Naive thymus-derived CD4-positive, alpha-beta T cell (primary cell): ENCODE measurements at regions of chr6 and their contacts with region 1.

Region 1: GRCh38 chr6:11232193-11232769 is at the start of gene NEDD9:
- DNase-seq: peak; percentile 76 to 97 (median 90)
- ATAC-seq: peak; percentile 97
- H3K4me3 ChIP-seq: peak within 1 kb of the TSS; percentile 69
- H3K4me3 Mint-ChIP-seq: peak within 1 kb of the TSS; percentile 86 to 98 (median 94)
- H3K27ac ChIP-seq: peak within 1 kb of the TSS; percentile 76
- H3K27ac Mint-ChIP-seq: peak within 1 kb of the TSS; percentile 88 to 99 (median 98)
- H3K4me1 ChIP-seq: peaks cover 19 to 26% of the 10 kb centered on the region in 2 donors
- H3K4me1 Mint-ChIP-seq: peaks cover 32 to 78% (median 46%) of the 10 kb centered on the region in 7 donors
- H3K27me3 ChIP-seq: no peaks in the 10 kb centered on the region
- H3K27me3 Mint-ChIP-seq: no peaks in the 10 kb centered on the region
- total RNA-seq, gene NEDD9: 29.4 to 62.9 (median 40.2) TPM

Region 2: DNA sequence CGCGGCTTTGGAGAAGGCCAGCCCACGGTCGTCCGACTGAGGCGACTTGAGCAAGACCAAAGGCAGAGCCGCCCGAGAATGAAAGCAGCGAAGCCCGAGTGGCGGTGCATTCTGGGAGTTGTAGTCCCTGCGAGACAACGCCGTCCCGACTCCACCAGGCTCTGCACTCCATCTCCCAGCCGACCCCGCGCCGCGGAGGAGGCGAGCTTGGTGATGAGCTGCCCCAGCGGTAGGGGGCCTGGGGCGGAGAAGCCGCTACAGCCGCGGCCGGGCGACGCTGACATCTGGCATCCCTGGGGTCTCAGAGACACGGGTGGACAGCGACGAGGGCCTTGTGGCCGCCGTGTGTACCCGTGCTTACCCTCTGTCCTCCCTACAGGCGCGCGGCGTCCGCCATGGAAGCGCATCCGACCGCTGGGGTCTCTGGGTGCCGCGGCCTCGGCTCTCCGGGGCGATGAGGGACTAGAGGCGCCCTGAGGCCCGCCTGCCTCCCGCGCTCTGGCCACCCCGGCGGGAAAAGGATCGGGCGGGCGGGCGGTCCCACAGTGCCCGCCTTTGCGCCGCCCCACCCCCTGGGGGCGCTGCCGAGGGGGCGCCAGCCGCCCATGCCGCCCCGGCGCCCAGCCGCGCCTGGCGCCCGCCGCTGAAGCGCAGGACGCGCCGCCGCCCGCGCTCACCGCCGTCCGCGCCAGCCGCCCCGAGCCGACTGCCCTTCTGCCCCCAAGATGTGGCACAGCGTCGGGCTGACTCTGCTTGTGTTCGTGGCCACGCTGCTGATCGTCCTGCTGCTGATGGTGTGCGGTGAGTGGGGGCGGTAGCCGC is 138.5 kb before region 1 on chr6 and contains the start of gene SMIM13:
- CTCF ChIA-PET with region 1: no interaction called
- POLR2A ChIA-PET with region 1: no interaction called
- intact Hi-C with region 1: loop called (anchors 1 kb)
- DNase-seq: peak; percentile 85 to 94 (median 93)
- ATAC-seq: peak; percentile 96
- H3K4me3 ChIP-seq: peak within 1 kb of the TSS; percentile 97
- H3K4me3 Mint-ChIP-seq: peak within 1 kb of the TSS; percentile 83 to 98 (median 97)
- H3K27ac ChIP-seq: peak within 1 kb of the TSS; percentile 88
- H3K27ac Mint-ChIP-seq: peak within 1 kb of the TSS; percentile 89 to 98 (median 97)
- H3K4me1 ChIP-seq: peaks cover 11 to 14% of the 10 kb centered on the region in 2 donors
- H3K4me1 Mint-ChIP-seq: peaks cover 21 to 43% (median 27%) of the 10 kb centered on the region in 7 donors
- H3K27me3 ChIP-seq: no peaks in the 10 kb centered on the region
- H3K27me3 Mint-ChIP-seq: no peaks in the 10 kb centered on the region
- total RNA-seq, gene SMIM13: 4.0 to 9.9 (median 4.4) TPM

Region 3: GRCh38 chr6:11209906-11210305 is 22.4 kb before region 1 on chr6:
- CTCF ChIA-PET with region 1: no interaction called
- POLR2A ChIA-PET with region 1: no interaction called
- intact Hi-C with region 1: loop called in 1 of 2 experiments (anchors 2 kb)
- DNase-seq: no peak
- ATAC-seq: no peak
- H3K4me3 ChIP-seq: no peak overlapping the region
- H3K4me3 Mint-ChIP-seq: no peak overlapping the region
- H3K27ac ChIP-seq: no peak overlapping the region
- H3K27ac Mint-ChIP-seq: peak overlapping the region in 1 of 9 donors; percentile 64
- H3K4me1 ChIP-seq: peaks cover 0 to 17% of the 10 kb centered on the region in 2 donors
- H3K4me1 Mint-ChIP-seq: peaks cover 12 to 68% (median 29%) of the 10 kb centered on the region in 7 donors
- H3K27me3 ChIP-seq: no peaks in the 10 kb centered on the region
- H3K27me3 Mint-ChIP-seq: no peaks in the 10 kb centered on the region

Region 4: GRCh38 chr6:11317885-11318771 is 85.8 kb after region 1 on chr6:
- CTCF ChIA-PET with region 1: no interaction called
- POLR2A ChIA-PET with region 1: no interaction called
- intact Hi-C with region 1: loop called in 1 of 2 experiments (anchors 1 kb)
- DNase-seq: peak in 6 of 9 donors; percentile 2 to 53 (median 14)
- ATAC-seq: peak; percentile 90
- H3K4me3 ChIP-seq: no peak overlapping the region
- H3K4me3 Mint-ChIP-seq: peak overlapping the region in 1 of 10 donors; percentile 8
- H3K27ac ChIP-seq: no peak overlapping the region
- H3K27ac Mint-ChIP-seq: peak overlapping the region in 6 of 9 donors; percentile 8 to 62 (median 31)
- H3K4me1 ChIP-seq: peaks cover 0 to 10% of the 10 kb centered on the region in 2 donors
- H3K4me1 Mint-ChIP-seq: peaks cover 13 to 51% (median 30%) of the 10 kb centered on the region in 7 donors
- H3K27me3 ChIP-seq: no peaks in the 10 kb centered on the region
- H3K27me3 Mint-ChIP-seq: no peaks in the 10 kb centered on the region

Region 5: GRCh38 chr6:11414176-11414963 is 182.1 kb after region 1 on chr6:
- CTCF ChIA-PET with region 1: no interaction called
- POLR2A ChIA-PET with region 1: no interaction called
- intact Hi-C with region 1: loop called in 1 of 2 experiments (anchors 2 kb)
- DNase-seq: peak in 6 of 9 donors; percentile 11 to 30 (median 18)
- ATAC-seq: peak; percentile 77
- H3K4me3 ChIP-seq: no peak overlapping the region
- H3K4me3 Mint-ChIP-seq: no peak overlapping the region
- H3K27ac ChIP-seq: no peak overlapping the region
- H3K27ac Mint-ChIP-seq: peak overlapping the region in 1 of 9 donors; percentile 10
- H3K4me1 ChIP-seq: peaks cover 0 to 4% of the 10 kb centered on the region in 2 donors
- H3K4me1 Mint-ChIP-seq: peaks cover 6 to 45% (median 10%) of the 10 kb centered on the region in 7 donors
- H3K27me3 ChIP-seq: no peaks in the 10 kb centered on the region
- H3K27me3 Mint-ChIP-seq: no peaks in the 10 kb centered on the region

Region 6: DNA sequence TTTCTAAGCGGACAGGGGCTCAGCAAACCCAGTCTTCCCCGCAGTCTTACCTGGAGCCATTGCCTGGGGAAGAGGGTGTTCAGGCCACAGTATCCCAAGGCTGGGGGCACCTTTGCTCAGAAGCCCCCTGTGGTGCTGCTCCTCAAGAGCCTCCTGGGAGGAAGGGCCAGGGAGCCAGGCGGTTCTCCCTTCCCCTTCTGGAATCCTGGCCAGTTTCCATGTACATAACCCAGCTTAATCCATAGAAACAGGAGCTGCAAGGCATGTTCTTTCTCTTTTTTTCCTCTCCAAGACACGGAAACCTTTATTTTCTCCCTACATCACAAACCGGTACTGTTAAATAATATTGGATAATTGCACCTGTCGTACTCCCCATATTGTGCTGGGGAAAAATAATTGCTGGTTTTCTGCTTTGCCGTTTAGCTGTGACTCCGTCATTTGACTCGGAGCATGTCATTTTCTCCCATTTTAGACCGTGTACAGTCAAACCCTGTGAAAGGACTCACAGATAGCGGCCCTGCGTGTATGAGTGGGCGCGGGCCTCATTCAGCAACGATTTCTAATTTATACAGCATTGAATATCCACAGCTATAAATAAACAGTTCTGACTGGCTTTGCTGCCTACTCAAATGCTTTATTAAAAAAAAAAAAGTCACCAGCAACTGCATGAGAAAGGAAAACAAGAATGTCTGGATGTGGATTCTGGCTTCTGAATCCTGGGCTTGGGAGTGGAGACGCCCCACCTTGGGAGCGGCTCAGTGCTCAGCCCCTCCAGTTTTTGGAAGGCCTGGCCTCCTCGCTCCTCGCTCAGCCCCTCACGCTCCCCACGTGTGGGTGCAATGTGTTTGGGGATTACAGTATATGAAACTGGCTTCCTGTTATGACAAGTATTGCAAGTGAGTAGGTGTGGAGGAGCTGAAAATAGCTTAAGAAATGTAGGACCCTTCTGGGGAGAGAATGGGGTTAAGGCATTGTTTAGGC is 479.0 kb after region 1 on chr6:
- CTCF ChIA-PET with region 1: no interaction called
- POLR2A ChIA-PET with region 1: no interaction called
- intact Hi-C with region 1: loop called in 1 of 2 experiments (anchors 10 kb)
- DNase-seq: peak in 8 of 9 donors; percentile 22 to 79 (median 38)
- ATAC-seq: peak; percentile 28
- H3K4me3 ChIP-seq: peak overlapping the region; percentile 13
- H3K4me3 Mint-ChIP-seq: peak overlapping the region; percentile 71 to 86 (median 75)
- H3K27ac ChIP-seq: peak overlapping the region; percentile 67
- H3K27ac Mint-ChIP-seq: peak overlapping the region; percentile 90 to 100 (median 97)
- H3K4me1 ChIP-seq: peaks cover 16 to 84% of the 10 kb centered on the region in 2 donors
- H3K4me1 Mint-ChIP-seq: peaks cover 55 to 92% (median 89%) of the 10 kb centered on the region in 7 donors
- H3K27me3 ChIP-seq: no peaks in the 10 kb centered on the region
- H3K27me3 Mint-ChIP-seq: no peaks in the 10 kb centered on the region